ENCODE measurements at regions of chr4 and their contacts with region 1.

Region 1: GRCh38 chr4:17447675-17448298 is 64.1 kb downstream of the QDPR start:
- DNase-seq: peak; percentile 45
- ATAC-seq: peak; percentile 97
- H3K4me3 Mint-ChIP-seq: no peak overlapping the region
- H3K27ac Mint-ChIP-seq: peak overlapping the region; percentile 0; the same call in 1 of the 2 replicates
- H3K4me1 Mint-ChIP-seq: no peaks in the 10 kb centered on the region
- H3K27me3 Mint-ChIP-seq: peaks cover 1% of the 10 kb centered on the region; the same call in 1 of the 2 replicates
- CTCF ChIP-seq: no peak; the same call in 1 of the 2 replicates

Region 2: GRCh38 chr4:17347445-17347844 is 100.3 kb before region 1 on chr4:
- CTCF ChIA-PET with region 1: interaction called, 69 read pairs
- POLR2A ChIA-PET with region 1: no interaction called
- DNase-seq: peak; percentile 57
- ATAC-seq: peak; percentile 72
- H3K4me3 Mint-ChIP-seq: no peak overlapping the region
- H3K27ac Mint-ChIP-seq: no peak overlapping the region
- H3K4me1 Mint-ChIP-seq: peaks cover 20% of the 10 kb centered on the region
- H3K27me3 Mint-ChIP-seq: no peaks in the 10 kb centered on the region
- CTCF ChIP-seq: peak; percentile 42

Region 3: DNA sequence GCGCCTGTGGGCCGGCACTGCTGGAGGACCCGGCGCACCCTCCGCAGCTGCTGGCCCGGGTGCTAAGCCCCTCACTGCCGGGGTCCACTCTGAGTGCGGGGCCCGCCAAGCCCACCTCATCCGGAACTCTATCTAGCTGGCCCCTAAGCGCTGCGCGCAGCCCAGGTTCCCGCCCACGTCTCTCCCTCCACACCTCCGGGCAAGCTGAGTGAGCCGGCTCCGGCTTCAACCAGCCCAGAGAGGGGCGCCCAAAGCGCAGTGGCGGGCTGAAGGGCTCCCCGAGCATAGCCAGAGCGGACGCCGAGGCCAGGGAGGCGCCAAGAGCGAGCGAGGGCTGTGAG is 11.1 kb before region 1 on chr4:
- CTCF ChIA-PET with region 1: interaction called, 12 read pairs
- POLR2A ChIA-PET with region 1: no interaction called
- DNase-seq: no peak
- ATAC-seq: peak; percentile 56
- H3K4me3 Mint-ChIP-seq: no peak overlapping the region
- H3K27ac Mint-ChIP-seq: no peak overlapping the region
- H3K4me1 Mint-ChIP-seq: peaks cover 5% of the 10 kb centered on the region; the same call in 1 of the 2 replicates
- H3K27me3 Mint-ChIP-seq: no peaks in the 10 kb centered on the region; the same call in 1 of the 2 replicates
- CTCF ChIP-seq: no peak

Region 4: DNA sequence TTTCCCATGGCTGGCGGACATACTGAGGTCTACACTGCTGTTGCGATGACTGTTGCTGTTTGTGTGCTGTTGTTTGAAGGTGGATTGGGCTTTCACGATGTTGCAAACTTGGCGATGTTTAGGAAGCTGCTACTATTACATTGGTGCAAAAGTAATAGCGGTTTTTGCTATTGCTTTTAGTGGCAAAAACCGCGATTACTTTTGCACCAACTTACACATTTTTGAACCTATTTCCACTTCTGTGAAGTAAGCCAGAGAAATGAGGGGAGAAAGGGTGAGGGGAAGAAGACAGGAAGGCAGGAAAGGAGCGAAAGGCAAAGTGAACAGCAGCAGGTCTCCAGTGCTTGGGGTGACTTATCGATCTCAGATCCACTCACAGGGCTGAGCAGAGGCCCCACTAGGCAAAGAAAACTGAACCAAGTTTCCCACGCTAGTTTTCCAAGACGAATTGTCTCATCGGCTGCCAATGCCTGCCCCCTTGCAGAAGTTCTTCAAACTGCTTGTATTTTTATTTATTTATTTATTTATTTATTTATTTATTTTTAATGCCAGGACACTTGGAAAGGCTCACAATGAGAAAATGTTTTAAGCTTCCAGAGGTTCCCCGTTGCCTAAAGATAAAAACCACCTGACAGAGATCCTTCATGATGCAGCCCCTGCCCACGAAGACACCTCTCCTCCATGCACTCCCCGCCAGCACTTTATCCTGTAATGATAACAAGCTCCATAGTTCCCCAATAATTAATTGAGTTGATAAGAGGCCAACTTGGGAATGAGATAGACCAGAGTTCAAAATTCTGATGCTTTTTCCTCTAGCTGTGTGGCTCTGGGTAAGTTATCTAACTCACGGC is 20.8 kb after region 1 on chr4:
- CTCF ChIA-PET with region 1: interaction called, 38 read pairs
- POLR2A ChIA-PET with region 1: no interaction called
- DNase-seq: peak; percentile 21
- ATAC-seq: no peak
- H3K4me3 Mint-ChIP-seq: no peak overlapping the region
- H3K27ac Mint-ChIP-seq: no peak overlapping the region
- H3K4me1 Mint-ChIP-seq: peaks cover 4% of the 10 kb centered on the region
- H3K27me3 Mint-ChIP-seq: no peaks in the 10 kb centered on the region
- CTCF ChIP-seq: peak; percentile 84